Activated CD8-positive, alpha-beta T cell treated with anti-CD3 and anti-CD28 coated beads for 36 hours (primary cell): ENCODE measurements at regions of chr9 and their contacts with region 1.

Region 1: GRCh38 chr9:104991144-104991953 is 63.4 kb upstream of the ABCA1 start:
- DNase-seq: peak; percentile 87
- ATAC-seq: peak; percentile 85
- H3K4me3 Mint-ChIP-seq: peak overlapping the region; percentile 78
- H3K27ac Mint-ChIP-seq: peak overlapping the region; percentile 82
- H3K4me1 Mint-ChIP-seq: peaks cover 32% of the 10 kb centered on the region
- H3K27me3 Mint-ChIP-seq: peaks cover 42% of the 10 kb centered on the region
- CTCF ChIP-seq: no peak

Region 2: DNA sequence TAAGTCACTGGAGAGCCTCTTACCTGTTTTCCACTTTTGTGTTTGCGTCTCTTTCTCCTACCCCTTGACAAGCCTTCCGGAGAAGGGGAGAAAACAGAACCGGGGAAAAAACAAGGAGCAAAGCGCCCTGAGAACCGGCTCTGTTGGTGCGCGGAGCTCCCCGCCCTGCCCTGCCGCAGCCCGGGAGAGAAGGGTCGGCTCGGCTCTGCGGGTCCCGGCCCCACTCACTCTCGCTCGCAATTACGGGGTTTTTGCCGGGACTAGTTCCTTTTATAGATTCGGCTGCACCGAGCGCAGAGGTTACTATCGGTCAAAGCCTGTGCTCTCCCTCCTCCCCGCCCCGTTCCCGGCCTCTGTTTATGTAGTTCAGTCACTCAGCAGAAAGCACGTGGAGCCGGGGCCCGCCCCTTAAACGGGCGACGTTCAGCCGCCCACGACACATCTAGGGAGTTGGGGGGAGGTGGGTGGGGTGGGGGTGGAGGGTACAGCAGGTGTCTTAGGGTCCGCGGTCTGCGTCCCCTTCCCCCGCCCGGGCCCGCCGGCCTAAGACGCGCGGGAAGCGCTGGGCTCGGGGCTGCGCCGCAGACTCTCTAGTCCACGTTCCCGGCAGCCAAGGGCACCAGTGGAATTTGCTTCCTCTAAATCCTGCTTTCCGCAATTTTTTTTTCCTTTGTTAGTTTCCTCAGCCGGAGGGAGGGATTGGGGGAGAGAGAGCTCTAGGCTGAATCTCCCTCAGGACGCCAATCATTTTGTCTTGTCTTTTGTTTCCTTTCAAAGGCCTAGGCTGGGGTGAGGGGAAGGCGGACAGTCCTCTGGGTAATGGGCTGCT is 63.2 kb before region 1 on chr9 and contains the start of gene ABCA1:
- CTCF ChIA-PET with region 1: interaction called, 3 read pairs
- POLR2A ChIA-PET with region 1: no interaction called
- intact Hi-C with region 1: loop called (anchors 5 kb)
- DNase-seq: peak; percentile 88
- ATAC-seq: peak; percentile 76
- H3K4me3 Mint-ChIP-seq: peak within 1 kb of the TSS; percentile 73
- H3K27ac Mint-ChIP-seq: no peak within 1 kb of the TSS
- H3K4me1 Mint-ChIP-seq: peaks cover 12% of the 10 kb centered on the region
- H3K27me3 Mint-ChIP-seq: peaks cover 15% of the 10 kb centered on the region
- CTCF ChIP-seq: no peak
- total RNA-seq, gene ABCA1: 0.20 to 0.38 TPM

Region 3: DNA sequence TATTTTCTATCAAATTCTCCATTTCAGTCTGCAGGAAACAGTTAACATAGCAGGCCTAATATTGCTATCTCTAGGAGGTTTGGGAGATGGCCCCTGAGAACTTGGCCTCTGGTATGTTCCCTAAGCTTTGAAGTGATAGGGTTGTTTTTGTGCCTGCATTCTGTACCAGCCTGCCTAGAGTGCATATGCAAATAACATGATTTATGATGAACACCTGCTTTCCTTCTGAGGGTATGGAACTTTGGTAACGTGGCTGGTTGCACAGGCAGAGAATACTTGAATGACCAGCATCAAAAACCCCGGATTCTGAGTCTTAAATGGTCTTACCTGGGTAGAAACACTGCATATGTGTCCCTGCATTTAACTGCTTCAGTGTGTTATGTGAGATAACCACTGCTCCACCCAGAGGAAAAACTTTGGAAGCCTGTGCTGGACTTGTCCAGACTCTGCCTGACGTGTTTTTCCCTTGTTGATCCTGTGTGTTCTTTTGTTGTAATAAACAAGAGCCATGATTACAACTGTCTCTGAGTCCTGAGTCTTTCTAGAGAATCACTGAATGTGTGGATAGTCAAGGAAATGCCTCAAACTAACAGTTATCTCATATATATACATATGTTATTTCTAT is 47.9 kb after region 1 on chr9:
- CTCF ChIA-PET with region 1: no interaction called
- POLR2A ChIA-PET with region 1: no interaction called
- intact Hi-C with region 1: no loop called
- DNase-seq: no peak
- ATAC-seq: no peak
- H3K4me3 Mint-ChIP-seq: no peak overlapping the region
- H3K27ac Mint-ChIP-seq: no peak overlapping the region
- H3K4me1 Mint-ChIP-seq: no peaks in the 10 kb centered on the region
- H3K27me3 Mint-ChIP-seq: peaks cover 1% of the 10 kb centered on the region
- CTCF ChIP-seq: no peak

Region 4: DNA sequence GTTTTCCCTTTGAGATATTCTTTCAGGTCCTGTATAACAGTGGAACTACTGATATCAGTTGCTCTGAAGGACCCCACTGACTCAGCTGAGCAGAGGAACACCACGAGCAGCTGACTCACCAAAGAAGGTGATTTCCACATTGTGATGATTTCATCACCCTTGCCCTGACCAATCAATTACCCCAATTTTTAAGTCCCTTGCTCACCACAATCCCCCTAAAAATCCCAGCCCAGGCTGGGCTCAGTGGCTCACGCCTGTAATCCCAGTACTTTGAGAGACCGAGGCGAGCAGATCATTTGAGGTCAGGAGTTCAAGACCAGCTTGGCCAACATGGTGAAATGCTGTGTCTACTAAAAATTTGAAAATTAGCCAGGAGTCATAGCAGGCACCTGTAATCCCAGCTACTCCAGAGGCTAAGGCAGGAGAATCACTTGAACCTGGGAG is 61.9 kb after region 1 on chr9:
- CTCF ChIA-PET with region 1: interaction called, 3 read pairs
- POLR2A ChIA-PET with region 1: no interaction called
- intact Hi-C with region 1: loop called (anchors 10 kb)
- DNase-seq: peak; percentile 81
- ATAC-seq: peak; percentile 93
- H3K4me3 Mint-ChIP-seq: no peak overlapping the region
- H3K27ac Mint-ChIP-seq: peak overlapping the region; percentile 72
- H3K4me1 Mint-ChIP-seq: peaks cover 26% of the 10 kb centered on the region
- H3K27me3 Mint-ChIP-seq: no peaks in the 10 kb centered on the region
- CTCF ChIP-seq: no peak

Region 5: GRCh38 chr9:105127863-105128220 is 136.5 kb after region 1 on chr9:
- CTCF ChIA-PET with region 1: no interaction called
- POLR2A ChIA-PET with region 1: no interaction called
- intact Hi-C with region 1: no loop called
- DNase-seq: peak; percentile 58
- ATAC-seq: peak; percentile 98
- H3K4me3 Mint-ChIP-seq: no peak overlapping the region
- H3K27ac Mint-ChIP-seq: peak overlapping the region; percentile 30
- H3K4me1 Mint-ChIP-seq: peaks cover 35% of the 10 kb centered on the region
- H3K27me3 Mint-ChIP-seq: no peaks in the 10 kb centered on the region
- CTCF ChIP-seq: no peak

Region 6: DNA sequence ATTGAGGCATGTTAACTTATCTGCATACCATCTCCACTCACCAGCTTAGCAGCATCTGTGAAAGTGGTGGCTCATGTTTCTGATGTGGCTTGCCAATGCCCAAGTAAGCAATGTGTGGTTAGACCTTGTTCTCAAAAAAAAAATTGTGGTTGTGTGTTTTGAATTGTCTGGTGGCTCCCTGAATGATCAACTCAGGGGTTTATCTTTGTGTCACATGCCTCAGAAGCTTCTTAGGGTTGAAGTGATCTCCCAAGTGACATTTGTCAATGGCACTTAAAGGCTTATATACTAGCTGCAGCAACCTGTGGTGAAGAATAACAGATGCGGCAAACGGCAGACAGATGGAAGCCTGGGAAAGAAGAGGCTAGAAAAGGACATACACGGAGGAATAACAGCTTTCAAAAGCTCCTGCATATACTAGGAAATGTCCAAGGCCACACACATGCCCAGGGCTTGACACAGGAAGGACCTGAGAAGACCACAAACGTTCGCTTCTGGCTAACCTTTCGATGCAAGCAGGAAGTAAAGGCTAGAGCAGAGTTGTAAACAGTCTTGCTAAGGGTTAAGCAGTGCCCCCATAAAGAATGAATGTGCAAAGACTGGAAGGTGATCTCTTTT is 414.3 kb after region 1 on chr9:
- CTCF ChIA-PET with region 1: no interaction called
- POLR2A ChIA-PET with region 1: no interaction called
- intact Hi-C with region 1: loop called (anchors 10 kb)
- DNase-seq: peak; percentile 76
- ATAC-seq: peak; percentile 88
- H3K4me3 Mint-ChIP-seq: peak overlapping the region; percentile 37
- H3K27ac Mint-ChIP-seq: peak overlapping the region; percentile 81
- H3K4me1 Mint-ChIP-seq: peaks cover 26% of the 10 kb centered on the region
- H3K27me3 Mint-ChIP-seq: peaks cover 61% of the 10 kb centered on the region
- CTCF ChIP-seq: no peak